ENCODE measurements at regions of chr9 and their contacts with region 1.

Region 1: DNA sequence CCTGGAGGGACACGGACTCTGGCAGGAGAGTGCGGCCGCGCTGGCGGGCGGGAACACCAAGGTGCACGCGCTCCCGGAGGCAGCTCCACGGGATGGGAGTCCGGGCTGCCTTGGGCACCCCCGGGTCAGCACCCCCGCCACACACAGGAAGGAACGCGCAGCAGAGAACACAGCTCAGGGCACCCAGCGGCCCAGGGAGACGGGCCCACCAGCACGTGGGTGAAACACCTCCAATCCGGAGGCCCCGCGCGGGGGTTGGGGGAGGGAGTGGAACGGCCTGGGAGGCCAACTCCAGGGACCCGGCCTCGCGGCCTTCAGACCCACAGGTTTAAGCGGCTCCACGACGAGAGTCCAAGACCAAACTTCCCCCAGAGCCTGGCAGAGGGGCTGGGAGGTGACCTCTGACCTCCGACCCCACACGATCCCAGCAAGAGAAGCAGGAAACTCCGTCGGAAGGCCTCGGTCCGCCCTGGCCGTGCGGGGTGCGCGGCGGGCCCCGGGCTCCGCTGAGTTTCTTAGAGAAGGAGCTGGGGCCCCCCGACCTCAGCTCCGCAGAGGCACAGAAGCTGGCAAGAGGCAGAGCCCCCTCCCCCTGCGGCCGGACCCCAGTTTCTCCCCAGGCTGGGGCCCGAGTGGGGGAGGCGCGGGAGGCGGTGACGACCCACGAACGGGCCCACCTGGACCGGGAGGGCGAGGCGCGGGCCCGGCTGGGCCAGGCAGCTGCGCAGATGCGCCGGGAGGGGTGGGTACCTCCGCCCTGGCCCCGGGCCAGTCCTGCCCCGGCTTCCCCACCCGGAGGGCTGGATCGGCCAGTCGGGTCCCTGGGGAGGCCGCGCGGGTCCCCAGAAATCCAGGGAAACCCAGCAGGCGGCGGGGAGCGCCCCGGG is 851 bp downstream of the NACC2 start:
- DNase-seq: no peak
- H3K4me3 ChIP-seq: peak overlapping the region; percentile 75
- CTCF ChIP-seq: peak; percentile 4

Region 2: GRCh38 chr9:135701959-135702721 is 392.1 kb before region 1 on chr9 and contains the start of gene KCNT1:
- CTCF ChIA-PET with region 1: no interaction called
- POLR2A ChIA-PET with region 1: no interaction called
- DNase-seq: no peak
- H3K4me3 ChIP-seq: no peak within 1 kb of the TSS
- CTCF ChIP-seq: peak; percentile 63

Region 3: GRCh38 chr9:136109351-136110081 is 15.3 kb after region 1 on chr9:
- CTCF ChIA-PET with region 1: interaction called, 10 read pairs
- POLR2A ChIA-PET with region 1: interaction called, 7 read pairs
- DNase-seq: peak; percentile 41
- H3K4me3 ChIP-seq: peak overlapping the region; percentile 34
- CTCF ChIP-seq: peak; percentile 9